Calu3 (cell line): ENCODE measurements at regions of chr12 and their contacts with region 1.

Region 1: DNA sequence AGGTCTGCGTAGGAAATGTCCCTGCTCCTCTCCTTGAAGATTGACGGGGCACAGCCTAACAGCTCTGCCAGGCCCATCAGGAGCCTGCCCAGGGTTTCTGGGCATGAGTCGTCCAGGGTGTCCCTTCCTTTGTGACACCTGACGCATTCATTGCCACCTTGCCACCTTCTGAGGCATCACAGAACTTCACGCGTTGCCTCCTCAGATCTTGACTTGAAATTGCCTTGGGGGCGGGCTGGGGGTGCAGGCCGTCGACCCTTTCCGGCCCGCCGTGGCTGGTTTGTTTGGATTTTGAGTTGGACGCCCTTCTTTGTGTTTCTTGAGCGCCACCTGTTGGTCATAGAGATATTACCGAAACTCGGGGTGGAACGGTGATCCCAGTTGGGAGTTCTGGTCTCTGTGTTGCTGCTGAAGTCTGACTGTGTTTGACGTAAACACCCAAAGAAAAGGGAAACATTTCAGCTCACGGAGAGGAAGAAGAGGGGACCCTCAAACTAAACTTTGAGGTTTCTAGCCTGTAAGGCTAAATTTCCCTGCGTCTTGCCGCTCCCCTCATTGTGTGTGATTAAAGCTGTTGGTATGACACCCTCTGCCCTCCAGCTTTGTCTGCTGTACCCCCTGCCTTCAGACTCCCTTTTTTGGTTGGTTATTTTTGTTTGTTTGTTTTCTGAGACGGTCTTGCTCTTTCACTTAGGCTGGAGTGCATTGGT is 44.6 kb downstream of the MLXIP start:
- DNase-seq: peak; percentile 81
- H3K4me3 Mint-ChIP-seq: peak overlapping the region; percentile 5
- H3K27ac Mint-ChIP-seq: peak overlapping the region; percentile 1
- H3K4me1 Mint-ChIP-seq: peaks cover 27% of the 10 kb centered on the region
- H3K27me3 Mint-ChIP-seq: no peaks in the 10 kb centered on the region
- CTCF ChIP-seq: no peak

Region 2: DNA sequence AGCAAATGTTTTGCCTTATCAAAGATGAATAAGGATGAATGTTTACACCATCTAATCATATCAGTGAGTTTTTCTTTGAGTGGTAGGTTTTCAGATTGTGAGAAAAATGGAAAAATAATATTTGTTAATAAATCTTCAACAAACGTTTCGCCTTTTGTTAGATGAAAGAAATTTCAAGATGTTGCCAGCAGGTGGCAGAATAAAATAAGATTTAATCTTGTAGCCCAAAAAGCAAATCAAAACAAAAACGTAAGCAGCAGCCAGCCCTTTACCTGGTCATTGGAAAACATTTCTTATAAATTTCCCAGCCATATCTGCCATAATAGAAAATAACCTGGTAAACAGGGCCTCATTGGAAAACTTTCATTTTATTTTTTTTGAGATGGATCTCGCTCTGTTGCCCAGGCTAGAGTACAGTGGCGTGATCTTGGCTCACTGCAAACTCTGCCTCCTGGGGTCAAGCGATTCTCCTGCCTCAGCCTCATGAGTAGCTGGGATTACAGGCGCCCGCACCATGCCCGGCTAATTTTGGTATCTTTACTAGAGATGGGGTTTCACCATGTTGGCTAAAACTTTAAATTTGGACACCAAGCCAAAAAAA is 426.0 kb before region 1 on chr12:
- CTCF ChIA-PET with region 1: no interaction called
- intact Hi-C with region 1: loop called (anchors 5 kb)
- DNase-seq: peak; percentile 57
- H3K4me3 Mint-ChIP-seq: no peak overlapping the region
- H3K27ac Mint-ChIP-seq: no peak overlapping the region
- H3K4me1 Mint-ChIP-seq: no peaks in the 10 kb centered on the region
- H3K27me3 Mint-ChIP-seq: no peaks in the 10 kb centered on the region
- CTCF ChIP-seq: peak; percentile 37

Region 3: GRCh38 chr12:122054842-122055520 is 68.2 kb before region 1 on chr12:
- CTCF ChIA-PET with region 1: interaction called, 20 read pairs
- intact Hi-C with region 1: loop called (anchors 1 kb)
- DNase-seq: no peak
- H3K4me3 Mint-ChIP-seq: no peak overlapping the region
- H3K27ac Mint-ChIP-seq: no peak overlapping the region
- H3K4me1 Mint-ChIP-seq: peaks cover 9% of the 10 kb centered on the region
- H3K27me3 Mint-ChIP-seq: no peaks in the 10 kb centered on the region
- CTCF ChIP-seq: no peak

Region 4: DNA sequence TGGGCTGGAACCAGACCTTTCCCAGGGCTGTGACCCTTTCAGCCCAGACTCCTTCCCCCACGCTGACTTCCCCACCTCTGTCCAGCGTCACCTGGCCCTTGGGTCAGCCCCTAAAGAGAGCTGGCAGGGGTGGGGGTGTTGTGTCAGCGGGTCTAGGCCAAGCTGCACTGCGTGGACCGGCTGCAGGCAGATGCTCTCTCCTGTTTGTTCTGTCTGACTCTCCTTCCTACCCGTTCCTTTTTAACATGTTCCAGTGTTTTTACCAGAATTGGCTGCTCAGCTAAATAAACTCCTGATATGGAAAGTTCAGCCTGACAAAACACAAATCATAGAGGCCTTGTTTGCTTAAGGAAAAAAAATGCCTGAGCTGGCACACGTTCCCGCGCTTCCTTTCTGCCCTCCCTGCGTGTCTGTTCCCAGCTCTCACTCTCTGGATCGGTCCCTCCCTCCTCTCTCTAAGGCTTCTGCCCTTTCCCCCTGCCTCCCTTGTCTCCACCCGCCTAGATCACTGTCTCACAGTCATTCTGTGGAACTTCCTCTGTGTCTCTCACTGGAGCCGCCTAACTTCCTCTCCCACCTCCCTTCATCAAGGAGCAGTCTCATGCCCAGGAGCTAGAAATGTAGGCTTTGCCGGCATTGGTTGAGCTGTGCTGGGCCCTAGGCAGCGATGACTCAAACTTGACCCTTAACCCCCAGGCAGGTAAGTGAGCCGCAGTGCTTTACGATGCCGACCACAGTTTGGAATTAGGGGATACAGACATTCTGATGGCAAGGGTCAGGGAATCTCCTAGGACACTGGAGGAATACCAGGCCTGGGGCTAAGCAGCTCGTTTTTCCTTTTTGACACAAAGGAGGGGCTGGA is 60.1 kb before region 1 on chr12:
- CTCF ChIA-PET with region 1: interaction called, 11 read pairs
- intact Hi-C with region 1: no loop called
- DNase-seq: peak; percentile 65
- H3K4me3 Mint-ChIP-seq: peak overlapping the region; percentile 45
- H3K27ac Mint-ChIP-seq: peak overlapping the region; percentile 86
- H3K4me1 Mint-ChIP-seq: peaks cover 16% of the 10 kb centered on the region
- H3K27me3 Mint-ChIP-seq: no peaks in the 10 kb centered on the region
- CTCF ChIP-seq: no peak